ENCODE measurements at regions of chr1 and their contacts with region 1.

Region 1: GRCh38 chr1:231357831-231358354 is 19.8 kb downstream of the SPRTN start:
- DNase-seq: peak; percentile 33
- H3K4me3 Mint-ChIP-seq: no peak overlapping the region
- H3K27ac Mint-ChIP-seq: no peak overlapping the region
- H3K4me1 Mint-ChIP-seq: no peaks in the 10 kb centered on the region
- H3K27me3 Mint-ChIP-seq: no peaks in the 10 kb centered on the region
- CTCF ChIP-seq: peak; percentile 57

Region 2: DNA sequence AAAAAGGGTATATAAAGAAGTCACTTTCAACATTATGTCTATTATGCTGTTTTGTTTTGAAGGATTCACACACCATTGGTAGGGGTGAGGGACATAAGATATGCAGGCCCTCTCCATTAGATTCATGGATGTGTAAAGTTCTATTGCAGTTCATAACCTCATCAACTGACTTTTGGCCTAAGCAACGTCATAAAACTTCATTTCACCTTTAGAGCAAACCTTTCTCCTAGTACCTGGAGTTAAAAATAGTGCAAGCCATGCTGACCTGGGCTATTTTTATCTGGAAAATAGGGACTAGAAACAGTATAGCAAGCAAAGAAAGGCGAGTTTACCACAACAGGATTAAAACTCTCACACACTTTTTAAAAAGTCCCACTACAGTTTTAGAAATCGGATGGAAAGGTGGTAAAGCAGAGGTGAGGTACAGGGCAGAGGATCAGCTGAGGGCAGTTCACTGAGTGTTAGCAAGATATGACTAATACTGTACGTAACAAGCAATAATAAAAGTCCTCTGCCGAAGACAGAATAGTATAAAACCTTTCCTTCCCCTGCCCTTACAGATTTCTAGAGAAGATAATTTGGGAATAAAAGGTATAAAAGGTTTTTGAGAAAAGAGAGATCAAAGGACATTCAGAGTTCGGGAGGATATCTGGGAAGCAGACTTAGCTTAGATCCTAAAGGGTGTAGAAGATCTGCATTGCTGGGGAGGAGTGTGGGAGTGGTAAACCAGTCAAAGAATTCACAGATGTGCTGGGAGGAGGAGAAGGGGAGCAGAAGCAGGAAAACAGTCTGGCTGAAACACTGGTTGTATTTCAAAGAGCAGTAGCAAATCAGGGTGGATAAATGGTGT is 49.9 kb after region 1 on chr1:
- CTCF ChIA-PET with region 1: no interaction called
- intact Hi-C with region 1: loop called (anchors 5 kb)
- DNase-seq: no peak
- H3K4me3 Mint-ChIP-seq: no peak overlapping the region
- H3K27ac Mint-ChIP-seq: no peak overlapping the region
- H3K4me1 Mint-ChIP-seq: peaks cover 13% of the 10 kb centered on the region
- H3K27me3 Mint-ChIP-seq: no peaks in the 10 kb centered on the region
- CTCF ChIP-seq: no peak

Region 3: GRCh38 chr1:231421993-231422764 is 64.3 kb after region 1 on chr1 and contains the start of gene EGLN1:
- CTCF ChIA-PET with region 1: no interaction called
- intact Hi-C with region 1: loop called (anchors 1 kb)
- DNase-seq: peak; percentile 90
- H3K4me3 Mint-ChIP-seq: peak within 1 kb of the TSS; percentile 78
- H3K27ac Mint-ChIP-seq: peak within 1 kb of the TSS; percentile 93
- H3K4me1 Mint-ChIP-seq: peaks cover 19% of the 10 kb centered on the region
- H3K27me3 Mint-ChIP-seq: no peaks in the 10 kb centered on the region
- CTCF ChIP-seq: no peak
- total RNA-seq, gene EGLN1: 33.3 and 34.9 TPM in 2 replicates

Region 4: GRCh38 chr1:231528172-231529029 is 170.5 kb after region 1 on chr1 and contains the start of gene TSNAX:
- CTCF ChIA-PET with region 1: no interaction called
- intact Hi-C with region 1: loop called (anchors 5 kb)
- DNase-seq: peak; percentile 96
- H3K4me3 Mint-ChIP-seq: peak within 1 kb of the TSS; percentile 98
- H3K27ac Mint-ChIP-seq: peak within 1 kb of the TSS; percentile 99
- H3K4me1 Mint-ChIP-seq: peaks cover 26% of the 10 kb centered on the region
- H3K27me3 Mint-ChIP-seq: no peaks in the 10 kb centered on the region
- CTCF ChIP-seq: no peak
- total RNA-seq, gene TSNAX: 55.5 and 56.9 TPM in 2 replicates

Region 5: DNA sequence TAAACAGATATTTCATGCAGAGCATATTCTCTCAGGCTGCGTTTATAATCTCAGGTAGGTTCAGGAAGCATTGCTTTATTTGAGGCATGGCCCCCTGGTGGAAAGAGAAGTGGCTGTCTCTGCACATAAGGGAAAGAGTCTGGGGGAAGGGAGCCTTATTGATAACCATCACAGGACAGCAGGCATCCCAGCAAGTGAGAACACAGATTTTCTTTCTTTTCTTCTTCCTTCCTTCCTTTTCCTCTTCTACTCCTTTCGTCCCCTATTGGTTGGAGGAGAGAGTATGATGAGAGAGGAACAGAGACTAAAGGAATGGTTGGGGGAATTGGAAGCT is 192.5 kb after region 1 on chr1:
- CTCF ChIA-PET with region 1: interaction called, 3 read pairs
- intact Hi-C with region 1: loop called (anchors 1 kb)
- DNase-seq: peak; percentile 49
- H3K4me3 Mint-ChIP-seq: no peak overlapping the region
- H3K27ac Mint-ChIP-seq: no peak overlapping the region
- H3K4me1 Mint-ChIP-seq: no peaks in the 10 kb centered on the region
- H3K27me3 Mint-ChIP-seq: no peaks in the 10 kb centered on the region
- CTCF ChIP-seq: peak; percentile 56

Region 6: GRCh38 chr1:231584124-231584523 is 226.2 kb after region 1 on chr1:
- CTCF ChIA-PET with region 1: interaction called, 3 read pairs
- intact Hi-C with region 1: loop called (anchors 1 kb)
- DNase-seq: peak; percentile 18
- H3K4me3 Mint-ChIP-seq: no peak overlapping the region
- H3K27ac Mint-ChIP-seq: no peak overlapping the region
- H3K4me1 Mint-ChIP-seq: no peaks in the 10 kb centered on the region
- H3K27me3 Mint-ChIP-seq: no peaks in the 10 kb centered on the region
- CTCF ChIP-seq: peak; percentile 17

Region 7: GRCh38 chr1:231590453-231591198 is 232.7 kb after region 1 on chr1:
- CTCF ChIA-PET with region 1: no interaction called
- intact Hi-C with region 1: loop called (anchors 1 kb)
- DNase-seq: peak; percentile 68
- H3K4me3 Mint-ChIP-seq: no peak overlapping the region
- H3K27ac Mint-ChIP-seq: no peak overlapping the region
- H3K4me1 Mint-ChIP-seq: no peaks in the 10 kb centered on the region
- H3K27me3 Mint-ChIP-seq: no peaks in the 10 kb centered on the region
- CTCF ChIP-seq: peak; percentile 77